ENCODE measurements at regions of chr20 and their contacts with region 1.

Region 1: GRCh38 chr20:20138301-20139064 is 86.2 kb downstream of the CFAP61 start:
- DNase-seq: no peak

Region 2: GRCh38 chr20:19986419-19986818 is 152.1 kb before region 1 on chr20:
- intact Hi-C with region 1: no loop called
- DNase-seq: no peak

Region 3: GRCh38 chr20:20092827-20093226 is 45.7 kb before region 1 on chr20:
- intact Hi-C with region 1: loop called (anchors 5 kb)
- DNase-seq: no peak

Region 4: DNA sequence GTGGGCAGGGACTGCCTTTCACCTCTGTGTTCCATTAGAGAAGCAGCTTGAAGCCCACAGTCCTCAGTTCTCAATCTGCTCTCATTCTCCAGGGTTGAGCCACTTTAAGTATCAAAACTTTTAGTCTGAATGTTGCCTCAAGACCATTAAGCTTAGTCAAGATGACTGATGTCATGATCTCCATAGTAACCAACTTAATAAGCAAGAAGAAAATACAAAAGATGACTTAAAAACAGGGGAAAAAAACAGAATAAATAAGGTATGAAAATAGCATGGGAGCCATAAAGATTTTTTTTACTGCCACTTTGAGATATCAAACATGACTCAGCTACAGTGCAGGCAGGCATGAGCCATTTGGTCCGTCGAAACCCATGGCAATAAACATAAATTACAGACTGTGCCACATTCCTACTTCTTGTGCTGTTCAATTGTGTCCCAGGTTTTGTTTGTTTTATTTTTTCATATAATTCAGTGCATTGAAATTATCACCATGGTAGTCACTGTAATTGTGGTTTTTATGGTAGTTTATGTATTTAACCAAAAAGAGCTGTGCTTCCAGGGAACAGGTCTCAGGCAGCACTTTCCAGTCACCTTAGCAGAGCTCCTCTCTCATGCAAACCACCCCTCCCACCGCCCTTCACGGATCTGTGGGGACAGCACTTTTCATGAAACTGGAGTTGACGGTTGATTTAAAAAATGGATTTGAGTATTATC is 72.9 kb after region 1 on chr20:
- intact Hi-C with region 1: loop called (anchors 1 kb)
- DNase-seq: no peak